MCF 10A (cell line): ENCODE measurements at regions of chr10 and their contacts with region 1.

Region 1: GRCh38 chr10:58662314-58662713 is 149.6 kb downstream of the BICC1 start:
- DNase-seq: peak; percentile 91
- H3K4me3 Mint-ChIP-seq: peak overlapping the region; percentile 12
- H3K27ac Mint-ChIP-seq: peak overlapping the region; percentile 91
- H3K4me1 Mint-ChIP-seq: peaks cover 42% of the 10 kb centered on the region
- H3K27me3 Mint-ChIP-seq: no peaks in the 10 kb centered on the region
- CTCF ChIP-seq: no peak

Region 2: DNA sequence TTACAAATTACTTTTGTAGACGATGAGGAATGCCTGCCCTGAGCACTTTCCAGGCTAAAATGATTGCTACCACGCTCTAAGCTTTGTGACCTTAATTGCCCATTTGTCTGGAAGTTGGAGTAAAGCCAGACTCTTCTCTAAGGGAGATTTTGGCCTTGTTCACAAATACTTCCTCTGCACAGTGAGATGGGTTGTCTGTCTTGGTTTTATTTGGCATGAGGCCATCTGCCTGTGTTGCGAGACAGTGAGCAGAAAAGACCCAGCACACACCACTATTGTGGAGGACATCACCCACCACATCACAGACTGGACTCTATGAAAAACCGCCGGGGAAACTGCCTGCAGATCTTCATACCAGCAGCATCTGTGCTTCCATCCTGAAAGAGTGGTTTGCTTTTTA is 11.3 kb before region 1 on chr10:
- CTCF ChIA-PET with region 1: no interaction called
- POLR2A ChIA-PET with region 1: interaction called, 15 read pairs
- intact Hi-C with region 1: no loop called
- DNase-seq: peak; percentile 66
- H3K4me3 Mint-ChIP-seq: no peak overlapping the region
- H3K27ac Mint-ChIP-seq: peak overlapping the region; percentile 16
- H3K4me1 Mint-ChIP-seq: peaks cover 33% of the 10 kb centered on the region
- H3K27me3 Mint-ChIP-seq: no peaks in the 10 kb centered on the region
- CTCF ChIP-seq: no peak

Region 3: GRCh38 chr10:58674251-58674650 is 11.9 kb after region 1 on chr10:
- CTCF ChIA-PET with region 1: no interaction called
- POLR2A ChIA-PET with region 1: no interaction called
- intact Hi-C with region 1: no loop called
- DNase-seq: no peak
- H3K4me3 Mint-ChIP-seq: no peak overlapping the region
- H3K27ac Mint-ChIP-seq: no peak overlapping the region
- H3K4me1 Mint-ChIP-seq: peaks cover 5% of the 10 kb centered on the region
- H3K27me3 Mint-ChIP-seq: no peaks in the 10 kb centered on the region
- CTCF ChIP-seq: no peak